WTC11 (cell line): ENCODE measurements at regions of chr20 and their contacts with region 1.

Region 1: GRCh38 chr20:62409931-62410745 is 3.1 kb upstream of the CABLES2 start:
- DNase-seq: peak; percentile 76
- ATAC-seq: peak; percentile 29
- H3K4me3 Mint-ChIP-seq: no peak overlapping the region
- H3K27ac Mint-ChIP-seq: no peak overlapping the region
- H3K4me1 Mint-ChIP-seq: peaks cover 9% of the 10 kb centered on the region
- H3K27me3 Mint-ChIP-seq: peaks cover 5% of the 10 kb centered on the region
- CTCF ChIP-seq: peak; percentile 54; the same call in 1 of the 2 replicates

Region 2: DNA sequence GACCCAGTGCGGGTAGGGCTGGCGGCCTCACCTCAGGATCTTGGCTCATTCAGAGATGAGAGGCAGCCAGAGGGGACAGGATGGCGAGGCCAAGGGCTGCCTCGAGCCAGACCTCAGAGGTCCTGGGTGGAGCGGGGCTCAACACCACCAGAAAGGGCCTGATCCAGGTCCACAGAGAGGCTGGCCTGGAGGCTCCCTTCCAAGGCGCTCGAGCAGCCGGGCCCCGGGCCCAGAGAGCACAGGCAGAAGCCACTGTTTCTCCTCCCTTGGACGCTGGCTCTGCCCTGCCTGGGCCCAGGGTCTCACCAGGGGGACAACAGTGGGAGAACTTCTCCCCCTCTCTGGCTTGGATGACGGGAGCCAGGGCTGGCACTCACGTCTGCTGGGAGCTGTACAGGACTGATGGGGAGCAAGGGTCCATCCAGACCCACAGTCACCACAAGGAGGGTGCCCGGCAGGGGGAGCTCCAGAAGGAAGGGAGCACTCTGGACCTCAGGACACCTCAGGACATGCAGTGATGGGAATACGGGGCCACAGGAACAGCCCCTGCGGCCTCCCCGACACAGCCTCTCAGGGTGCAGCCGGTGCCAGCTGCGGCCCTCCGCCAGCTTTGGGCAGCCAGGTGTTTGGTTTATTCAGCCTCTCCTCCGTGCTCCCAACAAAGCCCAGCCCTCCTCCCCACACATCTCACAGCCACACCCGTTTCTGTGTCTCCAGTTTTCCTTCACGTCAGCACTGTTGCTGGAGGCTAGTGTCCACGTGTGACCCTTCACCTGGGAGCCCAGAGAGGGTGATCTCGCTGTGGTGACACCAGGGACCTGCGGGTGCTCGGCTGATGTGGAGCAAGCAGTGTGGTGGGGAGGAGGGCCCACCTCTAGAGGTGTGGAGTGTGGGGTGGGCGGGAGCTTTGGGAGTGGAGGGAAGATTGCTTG is 14.6 kb before region 1 on chr20:
- CTCF ChIA-PET with region 1: interaction called, 10 read pairs
- POLR2A ChIA-PET with region 1: no interaction called
- DNase-seq: no peak
- ATAC-seq: peak; percentile 42
- H3K4me3 Mint-ChIP-seq: no peak overlapping the region
- H3K27ac Mint-ChIP-seq: peak overlapping the region; percentile 89
- H3K4me1 Mint-ChIP-seq: no peaks in the 10 kb centered on the region
- H3K27me3 Mint-ChIP-seq: no peaks in the 10 kb centered on the region
- CTCF ChIP-seq: no peak

Region 3: DNA sequence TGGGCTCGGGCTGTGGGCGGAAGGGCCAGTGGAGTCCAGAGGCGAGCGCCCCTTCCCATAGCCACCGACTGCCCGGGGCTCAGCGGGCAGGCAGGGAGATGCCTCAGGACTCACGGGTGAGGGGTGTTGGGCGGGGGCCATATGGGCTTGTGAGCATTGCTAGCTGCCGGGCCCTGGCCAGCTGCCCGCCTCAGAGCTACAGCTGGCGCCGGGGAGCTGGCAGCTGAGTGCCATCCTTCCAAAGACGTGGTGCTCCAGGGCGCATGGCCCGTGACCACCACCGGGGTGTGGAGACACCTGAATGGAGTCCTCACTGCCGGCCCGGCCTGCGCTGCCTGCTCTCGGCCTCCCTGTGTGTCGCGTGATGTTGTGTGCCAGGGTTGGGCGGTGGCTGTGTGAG is 27.8 kb after region 1 on chr20:
- CTCF ChIA-PET with region 1: interaction called, 12 read pairs
- POLR2A ChIA-PET with region 1: no interaction called
- DNase-seq: peak; percentile 31
- ATAC-seq: peak; percentile 58
- H3K4me3 Mint-ChIP-seq: no peak overlapping the region
- H3K27ac Mint-ChIP-seq: peak overlapping the region; percentile 69
- H3K4me1 Mint-ChIP-seq: no peaks in the 10 kb centered on the region
- H3K27me3 Mint-ChIP-seq: no peaks in the 10 kb centered on the region; the same call in none of the 2 replicates
- CTCF ChIP-seq: no peak